Activated CD4-positive, alpha-beta T cell treated with anti-CD3 and anti-CD28 coated beads for 36 hours (primary cell): ENCODE measurements at regions of chr1 and their contacts with region 1.

Region 1: DNA sequence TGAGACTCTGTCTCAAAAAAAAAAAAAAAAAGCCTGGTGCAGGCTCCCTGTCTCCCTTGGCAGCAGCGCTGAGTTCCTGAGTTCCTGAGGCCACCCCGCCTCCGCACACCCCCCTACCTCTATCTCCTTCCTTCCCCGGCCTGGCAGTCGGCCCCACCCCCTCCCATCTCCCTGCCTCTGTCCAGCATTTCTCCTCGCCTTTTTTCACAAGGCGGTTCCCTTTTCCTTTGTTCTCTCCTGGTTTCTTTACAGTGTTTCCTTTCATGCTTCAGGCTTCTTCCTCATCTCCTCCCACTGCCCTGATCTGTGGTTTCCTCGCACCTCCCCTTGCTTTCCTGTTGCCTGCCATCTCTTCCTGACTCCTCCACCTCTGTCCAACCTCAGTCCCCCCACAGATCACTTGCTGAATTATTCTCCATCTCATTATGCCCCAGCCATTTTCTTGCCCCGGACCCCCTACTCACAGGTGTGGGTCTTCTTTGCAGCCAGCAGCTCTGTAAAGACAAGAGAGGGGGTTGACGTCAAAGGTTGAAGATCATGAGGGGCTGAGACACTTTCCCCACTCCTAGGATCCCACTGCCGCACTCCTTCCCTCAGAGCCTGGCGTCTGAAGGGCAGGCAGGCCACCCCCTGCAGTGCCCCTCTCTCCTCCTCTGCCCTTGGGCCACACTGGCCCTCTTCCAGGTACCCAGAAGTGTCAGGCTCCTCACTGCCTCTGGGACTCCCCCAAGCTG is 2.5 kb downstream of the RORC start:
- DNase-seq: no peak
- ATAC-seq: no peak
- H3K4me3 Mint-ChIP-seq: peak overlapping the region; percentile 11
- H3K27ac Mint-ChIP-seq: peak overlapping the region; percentile 69
- H3K4me1 Mint-ChIP-seq: peaks cover 79% of the 10 kb centered on the region
- H3K27me3 Mint-ChIP-seq: no peaks in the 10 kb centered on the region

Region 2: GRCh38 chr1:151594143-151594625 is 234.9 kb before region 1 on chr1:
- CTCF ChIA-PET with region 1: no interaction called
- POLR2A ChIA-PET with region 1: no interaction called
- intact Hi-C with region 1: loop called in 1 of 2 experiments (anchors 2 kb)
- DNase-seq: peak; percentile 94
- ATAC-seq: peak; percentile 100
- H3K4me3 Mint-ChIP-seq: peak overlapping the region; percentile 53
- H3K27ac Mint-ChIP-seq: peak overlapping the region; percentile 29
- H3K4me1 Mint-ChIP-seq: peaks cover 9% of the 10 kb centered on the region
- H3K27me3 Mint-ChIP-seq: peaks cover 5% of the 10 kb centered on the region

Region 3: DNA sequence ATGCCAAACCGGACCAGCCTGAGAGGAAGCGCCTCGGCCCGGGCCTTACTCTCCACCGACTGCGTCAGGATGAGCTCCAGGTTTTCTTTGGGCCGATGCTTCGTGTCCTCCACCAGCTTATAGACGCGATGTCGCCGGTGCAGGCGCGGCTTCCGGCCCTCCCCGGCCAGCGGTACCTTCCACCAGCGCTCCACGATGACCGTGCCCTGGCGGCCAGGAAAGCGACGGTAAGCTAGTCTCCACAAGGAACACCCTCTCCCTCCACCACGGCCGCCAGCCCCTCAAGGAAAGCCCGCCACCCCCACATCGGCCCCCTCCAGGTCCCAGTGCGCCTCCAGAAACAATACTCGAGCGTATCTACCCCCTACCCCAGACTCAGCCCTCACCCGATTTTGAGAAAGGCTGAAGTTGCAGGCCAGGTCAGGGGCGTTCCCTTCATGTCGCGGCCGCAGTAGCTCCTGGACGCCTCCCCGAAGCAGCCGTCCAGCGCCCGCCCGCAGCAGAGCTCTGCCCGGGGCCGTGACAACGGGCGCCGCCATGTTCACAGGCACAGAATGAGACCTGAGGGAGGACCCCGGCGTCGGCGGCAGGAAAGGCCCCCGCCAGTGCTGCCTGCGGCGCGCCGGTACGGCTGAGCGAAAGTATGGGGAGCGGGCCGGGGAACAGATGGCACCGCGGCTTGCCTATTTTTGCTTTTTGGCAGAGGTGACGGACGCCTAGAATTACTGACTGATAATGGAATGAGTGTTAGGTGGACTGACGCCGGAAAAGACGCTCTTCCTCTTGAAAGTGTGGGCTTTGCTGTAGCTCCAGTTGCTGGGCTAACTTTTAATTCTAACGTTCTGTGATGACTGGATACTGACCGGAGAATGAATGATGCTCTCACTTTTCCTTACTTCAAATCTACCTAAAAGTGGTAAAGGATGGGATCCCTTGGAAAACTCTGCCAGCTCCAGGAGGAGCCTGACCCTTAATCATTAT is 65.9 kb before region 1 on chr1 and contains the start of gene MRPL9:
- CTCF ChIA-PET with region 1: interaction called, 12 read pairs
- POLR2A ChIA-PET with region 1: no interaction called
- intact Hi-C with region 1: no loop called
- DNase-seq: peak; percentile 94
- ATAC-seq: peak; percentile 99
- H3K4me3 Mint-ChIP-seq: peak within 1 kb of the TSS; percentile 89
- H3K27ac Mint-ChIP-seq: peak within 1 kb of the TSS; percentile 95
- H3K4me1 Mint-ChIP-seq: peaks cover 24% of the 10 kb centered on the region
- H3K27me3 Mint-ChIP-seq: no peaks in the 10 kb centered on the region
- total RNA-seq, gene MRPL9: 139 to 184 TPM

Region 4: GRCh38 chr1:152410599-152410998 is 581.5 kb after region 1 on chr1:
- CTCF ChIA-PET with region 1: no interaction called
- POLR2A ChIA-PET with region 1: no interaction called
- intact Hi-C with region 1: no loop called
- DNase-seq: no peak
- ATAC-seq: no peak
- H3K4me3 Mint-ChIP-seq: no peak overlapping the region
- H3K27ac Mint-ChIP-seq: no peak overlapping the region
- H3K4me1 Mint-ChIP-seq: no peaks in the 10 kb centered on the region
- H3K27me3 Mint-ChIP-seq: peaks cover 4% of the 10 kb centered on the region